ENCODE measurements at regions of chrX and their contacts with region 1.

Region 1: DNA sequence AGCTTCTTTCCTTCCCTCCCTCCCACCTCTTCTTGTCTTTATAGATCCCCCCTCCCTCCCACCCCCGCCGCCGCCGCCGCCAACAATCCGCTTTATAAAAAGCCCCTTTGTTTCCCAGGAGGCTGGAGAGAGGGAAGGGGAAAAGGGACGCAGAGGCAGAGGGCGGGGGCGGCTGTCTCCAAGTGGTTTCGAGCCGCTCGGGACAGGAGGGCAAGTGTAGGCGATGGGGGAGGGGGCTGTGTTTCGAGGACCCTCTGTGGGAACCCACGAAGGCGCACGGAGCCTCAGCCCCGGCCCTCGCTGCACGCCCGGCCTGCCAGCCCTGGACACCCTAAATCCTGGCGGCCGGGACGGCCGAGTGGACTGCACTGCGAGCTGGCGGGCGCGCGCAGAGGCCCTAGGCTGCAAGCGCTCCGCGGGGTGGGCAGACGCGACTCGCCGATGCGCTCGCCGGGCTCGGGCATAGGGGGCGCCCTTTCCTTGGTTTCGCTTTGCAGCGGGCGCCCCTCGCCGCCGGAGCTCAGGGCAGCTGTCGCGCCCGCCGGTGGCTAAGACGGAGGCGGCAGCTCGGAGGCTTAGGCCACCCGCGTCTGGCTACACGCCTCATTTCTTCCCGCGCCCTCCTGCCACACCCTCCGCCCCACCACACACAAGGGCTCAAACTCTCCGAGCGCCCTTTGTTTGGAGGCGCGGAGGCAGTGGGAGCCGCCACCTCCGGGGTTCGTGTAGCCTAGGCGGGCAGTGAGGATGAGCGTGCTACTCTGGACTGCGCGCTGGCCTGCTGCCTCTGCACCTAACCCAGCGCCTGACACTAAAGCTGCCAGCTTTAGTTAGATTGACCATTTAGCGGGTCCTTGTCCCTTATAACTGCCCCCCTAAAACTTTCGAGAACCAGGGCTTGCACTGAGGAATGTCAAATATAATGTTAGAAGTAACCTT is 2.2 kb downstream of the MAMLD1 start:
- DNase-seq: peak; percentile 75
- ATAC-seq: peak; percentile 55 to 67

Region 2: GRCh38 chrX:149962859-149963757 is 402.2 kb before region 1 on chrX:
- intact Hi-C with region 1: loop called in 1 of 2 experiments (anchors 10 kb)
- DNase-seq: peak; percentile 53
- ATAC-seq: peak; percentile 87 to 94

Region 3: GRCh38 chrX:149987613-149988012 is 377.7 kb before region 1 on chrX:
- intact Hi-C with region 1: loop called in 1 of 2 experiments (anchors 10 kb)
- DNase-seq: no peak
- ATAC-seq: no peak

Region 4: GRCh38 chrX:150486011-150486410 is 120.7 kb after region 1 on chrX:
- intact Hi-C with region 1: loop called in 1 of 2 experiments (anchors 10 kb)
- DNase-seq: peak; percentile 57
- ATAC-seq: peak; percentile 47 to 70

Measured in left cardiac atrium (tissue), 4 donors.